ENCODE measurements at regions of chrX and their contacts with region 1.

Region 1: GRCh38 chrX:96684339-96685209 is at the start of gene DIAPH2:
- DNase-seq: peak; percentile 30 to 88
- H3K4me3 ChIP-seq: peak within 1 kb of the TSS; percentile 61 to 68
- H3K27ac ChIP-seq: peak within 1 kb of the TSS; percentile 61 to 77
- H3K4me1 ChIP-seq: no peaks in the 10 kb centered on the region
- H3K27me3 ChIP-seq: no peaks in the 10 kb centered on the region
- CTCF ChIP-seq: peak in 2 of 3 experiments; percentile 12 to 22
- total RNA-seq, gene DIAPH2: 27.9 TPM

Region 2: GRCh38 chrX:96372313-96373046 is 312.1 kb before region 1 on chrX:
- intact Hi-C with region 1: loop called (anchors 5 kb)
- DNase-seq: no peak
- H3K4me3 ChIP-seq: peak overlapping the region in 1 of 2 donors; percentile 41
- H3K27ac ChIP-seq: no peak overlapping the region
- H3K4me1 ChIP-seq: no peaks in the 10 kb centered on the region
- H3K27me3 ChIP-seq: no peaks in the 10 kb centered on the region
- CTCF ChIP-seq: peak in 2 of 3 experiments; percentile 50 to 62

Region 3: GRCh38 chrX:96436105-96436504 is 248.5 kb before region 1 on chrX:
- intact Hi-C with region 1: loop called (anchors 5 kb)
- DNase-seq: no peak
- H3K4me3 ChIP-seq: no peak overlapping the region
- H3K27ac ChIP-seq: peak overlapping the region; percentile 30 to 63
- H3K4me1 ChIP-seq: peaks cover 0 to 3% of the 10 kb centered on the region in 2 donors
- H3K27me3 ChIP-seq: no peaks in the 10 kb centered on the region
- CTCF ChIP-seq: no peak

Region 4: GRCh38 chrX:96563663-96564062 is 120.9 kb before region 1 on chrX:
- intact Hi-C with region 1: loop called (anchors 5 kb)
- DNase-seq: no peak
- H3K4me3 ChIP-seq: no peak overlapping the region
- H3K27ac ChIP-seq: no peak overlapping the region
- H3K4me1 ChIP-seq: no peaks in the 10 kb centered on the region
- H3K27me3 ChIP-seq: no peaks in the 10 kb centered on the region
- CTCF ChIP-seq: no peak

Region 5: GRCh38 chrX:96861218-96861617 is 176.6 kb after region 1 on chrX:
- intact Hi-C with region 1: no loop called
- DNase-seq: no peak
- H3K4me3 ChIP-seq: no peak overlapping the region
- H3K27ac ChIP-seq: no peak overlapping the region
- H3K4me1 ChIP-seq: no peaks in the 10 kb centered on the region
- H3K27me3 ChIP-seq: no peaks in the 10 kb centered on the region
- CTCF ChIP-seq: no peak

Measured in ascending aorta (tissue), 2 donors.